Left ventricle myocardium inferior (tissue), 1 donor: ENCODE measurements at regions of chr2 and their contacts with region 1.

Region 1: DNA sequence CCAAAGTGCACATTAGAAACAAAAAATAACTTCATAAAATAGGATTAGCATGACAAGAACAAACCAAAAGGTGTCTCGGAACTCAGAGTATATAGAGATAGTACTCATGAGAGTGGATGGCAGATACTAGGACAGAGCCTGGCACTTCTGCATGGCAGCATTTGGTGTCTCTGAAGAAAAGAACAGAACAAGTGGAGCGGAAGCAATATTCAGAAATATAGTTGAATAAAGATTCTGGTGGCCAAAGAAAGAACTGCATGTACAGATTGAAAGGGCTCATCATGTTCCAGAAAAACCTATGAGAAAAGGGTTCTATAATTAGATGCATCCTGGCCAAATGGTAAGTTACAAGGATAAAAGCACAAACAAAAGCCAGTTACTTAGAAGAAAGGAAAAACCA is 90.9 kb downstream of the CCDC138 start:
- DNase-seq: no peak
- H3K4me3 ChIP-seq: no peak overlapping the region
- H3K27ac ChIP-seq: no peak overlapping the region
- H3K4me1 ChIP-seq: no peaks in the 10 kb centered on the region
- H3K27me3 ChIP-seq: no peaks in the 10 kb centered on the region
- CTCF ChIP-seq: peak; percentile 19

Region 2: DNA sequence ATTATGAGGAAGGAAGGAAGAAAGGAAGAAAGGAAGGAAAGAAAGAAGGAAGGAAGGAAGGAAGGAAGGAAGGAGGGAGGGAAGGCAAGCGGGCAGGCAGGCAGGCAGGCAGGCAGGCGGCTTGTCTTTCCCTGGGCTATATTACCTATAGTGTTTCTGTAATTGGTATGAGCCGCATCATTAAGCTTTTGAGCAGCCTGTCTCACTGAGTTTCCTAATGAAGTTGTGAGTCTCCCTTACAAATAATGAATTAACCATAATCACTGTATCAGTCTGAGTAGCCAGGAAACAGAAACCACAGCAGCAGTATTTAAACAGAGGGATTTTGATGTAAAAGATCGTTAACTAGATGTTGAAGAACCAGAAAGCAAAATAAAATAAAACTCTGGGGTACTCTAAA is 649.5 kb before region 1 on chr2:
- intact Hi-C with region 1: no loop called
- DNase-seq: no peak
- H3K4me3 ChIP-seq: no peak overlapping the region
- H3K27ac ChIP-seq: no peak overlapping the region
- H3K4me1 ChIP-seq: no peaks in the 10 kb centered on the region
- H3K27me3 ChIP-seq: no peaks in the 10 kb centered on the region
- CTCF ChIP-seq: no peak

Region 3: GRCh38 chr2:108701208-108701607 is 176.3 kb before region 1 on chr2:
- intact Hi-C with region 1: no loop called
- DNase-seq: no peak
- H3K4me3 ChIP-seq: no peak overlapping the region
- H3K27ac ChIP-seq: no peak overlapping the region
- H3K4me1 ChIP-seq: peaks cover 10% of the 10 kb centered on the region
- H3K27me3 ChIP-seq: no peaks in the 10 kb centered on the region
- CTCF ChIP-seq: no peak

Region 4: DNA sequence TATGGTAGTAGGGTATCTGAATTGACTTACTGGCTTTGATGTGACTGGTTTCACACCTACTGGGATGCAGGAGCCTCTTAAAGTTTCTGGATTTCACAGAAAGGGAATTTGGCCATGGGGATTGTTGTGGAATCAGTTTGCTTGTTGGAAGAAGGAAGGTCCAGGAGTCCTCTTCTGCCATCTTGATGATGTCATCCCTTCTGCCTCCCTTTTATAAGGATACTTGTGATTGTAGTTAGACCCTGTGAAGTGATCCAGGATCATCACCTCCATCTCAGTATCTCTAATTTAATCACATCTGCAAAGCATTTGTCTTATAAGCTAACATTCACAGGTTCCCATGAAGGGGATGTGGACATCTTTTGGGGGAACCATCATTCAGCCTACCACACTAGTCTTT is 11.5 kb before region 1 on chr2:
- intact Hi-C with region 1: no loop called
- DNase-seq: no peak
- H3K4me3 ChIP-seq: no peak overlapping the region
- H3K27ac ChIP-seq: no peak overlapping the region
- H3K4me1 ChIP-seq: no peaks in the 10 kb centered on the region
- H3K27me3 ChIP-seq: no peaks in the 10 kb centered on the region
- CTCF ChIP-seq: no peak

Region 5: DNA sequence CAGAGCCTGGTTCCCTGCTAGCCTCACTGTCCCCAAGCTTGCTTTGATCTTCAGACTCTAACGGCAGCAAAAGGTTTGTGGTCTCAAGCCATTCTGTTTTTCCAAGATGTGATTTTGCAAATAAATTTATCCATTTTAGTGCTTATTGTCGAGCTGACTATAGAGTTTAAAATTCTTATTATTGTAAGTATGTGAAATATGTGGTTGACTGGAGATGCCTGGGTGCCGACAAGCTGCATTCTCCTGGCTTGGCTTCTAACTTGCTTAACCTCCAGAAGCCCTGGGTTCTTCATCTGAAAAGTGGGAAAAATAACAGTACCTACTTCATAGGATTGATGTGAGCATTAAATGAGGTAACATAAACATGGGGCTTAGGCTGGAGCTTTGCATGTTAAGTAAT is 121.4 kb after region 1 on chr2:
- intact Hi-C with region 1: loop called (anchors 10 kb)
- DNase-seq: no peak
- H3K4me3 ChIP-seq: no peak overlapping the region
- H3K27ac ChIP-seq: no peak overlapping the region
- H3K4me1 ChIP-seq: no peaks in the 10 kb centered on the region
- H3K27me3 ChIP-seq: peaks cover 4% of the 10 kb centered on the region
- CTCF ChIP-seq: no peak